SK-N-SH (cell line): ENCODE measurements at regions of chr3 and their contacts with region 1.

Region 1: DNA sequence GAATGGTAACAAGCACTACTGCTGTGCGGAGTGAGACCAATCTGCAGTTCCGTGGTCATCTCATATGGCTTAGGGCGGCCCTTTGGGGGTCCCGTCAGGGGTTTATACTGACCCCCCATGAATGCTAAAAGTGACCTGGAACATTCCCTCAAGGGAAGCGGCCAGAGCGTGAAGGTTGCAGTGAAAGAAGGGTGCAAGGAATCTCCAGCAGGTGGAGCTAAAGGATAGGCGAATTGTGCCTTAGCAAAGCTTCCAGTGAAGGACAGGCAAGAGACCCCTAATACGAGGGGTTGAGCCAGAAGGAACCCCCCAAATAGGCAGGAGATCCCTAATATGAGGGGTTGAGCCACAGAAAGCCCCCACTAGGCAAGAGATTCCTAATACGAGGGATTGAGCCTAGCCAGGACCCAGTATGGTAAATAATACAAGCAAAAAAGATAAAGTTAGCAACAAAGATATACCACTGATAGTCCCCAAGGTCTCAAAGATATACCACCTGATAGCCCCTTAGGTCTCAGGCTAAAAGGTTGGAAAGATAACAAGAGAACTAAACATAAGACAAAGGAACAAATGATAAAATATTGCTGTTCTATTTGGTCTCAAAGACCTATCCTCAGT is 32.8 kb downstream of the ZNF589 start:
- DNase-seq: peak; percentile 85
- H3K4me3 ChIP-seq: no peak overlapping the region; a peak in 1 of 4 replicates
- H3K27ac ChIP-seq: no peak overlapping the region
- H3K4me1 ChIP-seq: no peaks in the 10 kb centered on the region; a peak in 1 of 4 replicates
- H3K27me3 ChIP-seq: no peaks in the 10 kb centered on the region
- CTCF ChIP-seq: peak; percentile 81
- EP300 ChIP-seq: no peak
- RAD21 ChIP-seq: peak; percentile 95

Region 2: GRCh38 chr3:48256557-48256956 is 17.1 kb before region 1 on chr3:
- CTCF ChIA-PET with region 1: interaction called, 10 read pairs
- POLR2A ChIA-PET with region 1: no interaction called
- DNase-seq: no peak
- H3K4me3 ChIP-seq: no peak overlapping the region
- H3K27ac ChIP-seq: no peak overlapping the region
- H3K4me1 ChIP-seq: no peaks in the 10 kb centered on the region
- H3K27me3 ChIP-seq: no peaks in the 10 kb centered on the region
- CTCF ChIP-seq: no peak
- EP300 ChIP-seq: no peak
- RAD21 ChIP-seq: no peak

Region 3: DNA sequence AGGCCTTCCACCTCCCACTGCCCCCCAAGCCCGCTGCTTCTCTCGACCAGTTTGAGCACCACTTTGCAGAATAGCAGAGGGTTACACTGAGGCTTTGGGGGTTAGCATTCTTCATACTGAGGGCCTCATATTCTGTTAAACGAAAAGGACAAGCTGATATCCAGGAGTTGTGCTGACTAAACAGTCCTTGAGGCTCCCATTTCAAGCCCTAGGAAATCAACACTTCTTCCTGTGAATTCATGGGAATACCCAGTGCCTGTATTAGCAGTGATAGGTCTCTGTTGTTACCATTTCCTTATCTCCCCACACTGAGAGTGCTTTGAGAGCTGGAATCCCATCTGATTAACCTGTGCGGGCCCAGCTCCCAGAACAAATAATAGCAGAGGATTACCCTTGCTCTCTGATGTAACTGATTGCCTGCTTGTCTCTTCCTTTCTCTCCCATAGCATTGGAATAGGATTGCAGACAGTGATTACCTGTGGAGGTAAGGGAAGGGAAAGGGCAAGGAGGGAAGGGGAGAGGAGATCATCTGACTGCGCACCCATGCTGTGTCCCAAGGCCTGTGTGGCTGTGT is 99.2 kb after region 1 on chr3:
- CTCF ChIA-PET with region 1: no interaction called
- POLR2A ChIA-PET with region 1: no interaction called
- DNase-seq: peak; percentile 30
- H3K4me3 ChIP-seq: no peak overlapping the region
- H3K27ac ChIP-seq: peak overlapping the region in 1 of 2 experiments; percentile 67; a peak in 1 of 4 replicates
- H3K4me1 ChIP-seq: peaks cover 0 to 23% of the 10 kb centered on the region in 2 experiments; a peak in 1 of 4 replicates
- H3K27me3 ChIP-seq: no peaks in the 10 kb centered on the region
- CTCF ChIP-seq: no peak
- EP300 ChIP-seq: no peak
- RAD21 ChIP-seq: no peak